ENCODE measurements at regions of chr2 and their contacts with region 1.

Region 1: DNA sequence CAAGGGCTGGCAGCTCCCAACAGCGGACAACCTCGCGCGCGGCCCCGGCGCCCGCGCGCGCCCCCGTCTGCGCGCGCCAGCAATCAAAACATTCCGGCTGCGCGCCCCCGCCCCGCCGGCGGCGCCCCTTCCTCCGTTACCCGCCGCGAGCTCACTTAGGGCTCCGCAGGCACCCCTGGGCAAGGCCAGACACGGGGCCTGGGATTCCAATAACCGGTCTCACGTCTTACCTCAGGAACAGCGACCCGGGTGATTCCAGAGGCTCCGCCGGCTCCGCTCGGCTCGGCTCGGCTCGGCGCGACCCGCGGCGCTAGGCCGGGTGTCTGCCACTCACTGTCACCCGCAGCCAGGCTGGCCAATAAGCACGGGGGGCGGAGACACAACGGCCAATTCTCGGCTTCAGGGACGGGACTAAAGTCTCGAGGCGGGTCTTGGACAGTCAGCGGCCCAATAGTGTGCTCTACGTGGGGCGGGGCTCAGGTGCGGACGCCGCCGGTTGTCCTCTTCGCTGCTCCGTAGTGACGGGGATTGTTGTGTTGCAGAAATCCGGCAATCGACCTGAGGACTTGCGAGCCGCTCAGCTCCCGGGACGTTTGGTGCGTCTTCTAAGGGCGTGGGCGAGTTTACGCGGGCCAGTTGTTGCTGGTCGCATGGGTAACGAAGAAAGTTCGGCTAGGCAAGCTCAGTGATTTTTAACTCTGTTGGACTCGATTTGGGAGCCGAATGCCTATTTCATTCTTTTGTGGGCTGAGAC is at the starts of genes ANKZF1 and ATG9A:
- DNase-seq: peak; percentile 95 to 99 (median 98)
- ATAC-seq: peak; percentile 96
- H3K4me3 ChIP-seq: peak within 1 kb of the TSS; percentile 83 to 93
- H3K4me3 Mint-ChIP-seq: peak within 1 kb of the TSS; percentile 99
- H3K27ac ChIP-seq: peak within 1 kb of the TSS; percentile 79 to 95
- H3K27ac Mint-ChIP-seq: peak within 1 kb of the TSS; percentile 98
- H3K4me1 ChIP-seq: peaks cover 39% of the 10 kb centered on the region
- H3K4me1 Mint-ChIP-seq: peaks cover 58% of the 10 kb centered on the region
- H3K27me3 ChIP-seq: no peaks in the 10 kb centered on the region
- H3K27me3 Mint-ChIP-seq: no peaks in the 10 kb centered on the region
- CTCF ChIP-seq: no peak
- total RNA-seq, gene ANKZF1: 97.4 to 99.5 TPM
- total RNA-seq, gene ATG9A: 103 to 116 TPM

Region 2: GRCh38 chr2:218710687-218711549 is 518.6 kb before region 1 on chr2 and contains the start of gene TTLL4:
- CTCF ChIA-PET with region 1: no interaction called
- POLR2A ChIA-PET with region 1: no interaction called
- intact Hi-C with region 1: loop called in 1 of 2 experiments (anchors 1 kb)
- DNase-seq: peak; percentile 97 to 99 (median 99)
- ATAC-seq: peak; percentile 99
- H3K4me3 ChIP-seq: peak within 1 kb of the TSS; percentile 86 to 92
- H3K4me3 Mint-ChIP-seq: peak within 1 kb of the TSS; percentile 91
- H3K27ac ChIP-seq: peak within 1 kb of the TSS; percentile 73 to 90
- H3K27ac Mint-ChIP-seq: peak within 1 kb of the TSS; percentile 84
- H3K4me1 ChIP-seq: peaks cover 13% of the 10 kb centered on the region
- H3K4me1 Mint-ChIP-seq: peaks cover 19% of the 10 kb centered on the region
- H3K27me3 ChIP-seq: no peaks in the 10 kb centered on the region
- H3K27me3 Mint-ChIP-seq: peaks cover 6% of the 10 kb centered on the region
- CTCF ChIP-seq: peak; percentile 76
- total RNA-seq, gene TTLL4: 6.9 to 8.1 TPM

Region 3: GRCh38 chr2:219218732-219219701 is 10.5 kb before region 1 on chr2 and contains the start of gene ABCB6:
- CTCF ChIA-PET with region 1: interaction called, 6 read pairs
- POLR2A ChIA-PET with region 1: interaction called, 34 read pairs
- intact Hi-C with region 1: loop called (anchors 1 kb)
- DNase-seq: peak; percentile 59 to 92 (median 87)
- ATAC-seq: peak; percentile 91
- H3K4me3 ChIP-seq: peak within 1 kb of the TSS; percentile 50 to 87
- H3K4me3 Mint-ChIP-seq: peak within 1 kb of the TSS; percentile 82
- H3K27ac ChIP-seq: peak within 1 kb of the TSS; percentile 43 to 47
- H3K27ac Mint-ChIP-seq: peak within 1 kb of the TSS; percentile 72
- H3K4me1 ChIP-seq: peaks cover 23% of the 10 kb centered on the region
- H3K4me1 Mint-ChIP-seq: peaks cover 19% of the 10 kb centered on the region
- H3K27me3 ChIP-seq: no peaks in the 10 kb centered on the region
- H3K27me3 Mint-ChIP-seq: no peaks in the 10 kb centered on the region
- CTCF ChIP-seq: no peak
- total RNA-seq, gene ABCB6: 3.4 to 3.5 TPM

Region 4: GRCh38 chr2:219245148-219245898 is 15.8 kb after region 1 on chr2 and contains the starts of genes GLB1L and STK16:
- CTCF ChIA-PET with region 1: interaction called, 14 read pairs
- POLR2A ChIA-PET with region 1: interaction called, 184 read pairs
- intact Hi-C with region 1: loop called (anchors 1 kb)
- DNase-seq: peak; percentile 67 to 94 (median 87)
- ATAC-seq: peak; percentile 37
- H3K4me3 ChIP-seq: peak within 1 kb of the TSS; percentile 68 to 94
- H3K4me3 Mint-ChIP-seq: peak within 1 kb of the TSS; percentile 94
- H3K27ac ChIP-seq: peak within 1 kb of the TSS; percentile 89 to 96
- H3K27ac Mint-ChIP-seq: peak within 1 kb of the TSS; percentile 99
- H3K4me1 ChIP-seq: peaks cover 58% of the 10 kb centered on the region
- H3K4me1 Mint-ChIP-seq: peaks cover 68% of the 10 kb centered on the region
- H3K27me3 ChIP-seq: no peaks in the 10 kb centered on the region
- H3K27me3 Mint-ChIP-seq: no peaks in the 10 kb centered on the region
- CTCF ChIP-seq: no peak
- total RNA-seq, gene GLB1L: 1.7 to 2.8 TPM
- total RNA-seq, gene STK16: 12.9 to 13.2 TPM

Region 5: DNA sequence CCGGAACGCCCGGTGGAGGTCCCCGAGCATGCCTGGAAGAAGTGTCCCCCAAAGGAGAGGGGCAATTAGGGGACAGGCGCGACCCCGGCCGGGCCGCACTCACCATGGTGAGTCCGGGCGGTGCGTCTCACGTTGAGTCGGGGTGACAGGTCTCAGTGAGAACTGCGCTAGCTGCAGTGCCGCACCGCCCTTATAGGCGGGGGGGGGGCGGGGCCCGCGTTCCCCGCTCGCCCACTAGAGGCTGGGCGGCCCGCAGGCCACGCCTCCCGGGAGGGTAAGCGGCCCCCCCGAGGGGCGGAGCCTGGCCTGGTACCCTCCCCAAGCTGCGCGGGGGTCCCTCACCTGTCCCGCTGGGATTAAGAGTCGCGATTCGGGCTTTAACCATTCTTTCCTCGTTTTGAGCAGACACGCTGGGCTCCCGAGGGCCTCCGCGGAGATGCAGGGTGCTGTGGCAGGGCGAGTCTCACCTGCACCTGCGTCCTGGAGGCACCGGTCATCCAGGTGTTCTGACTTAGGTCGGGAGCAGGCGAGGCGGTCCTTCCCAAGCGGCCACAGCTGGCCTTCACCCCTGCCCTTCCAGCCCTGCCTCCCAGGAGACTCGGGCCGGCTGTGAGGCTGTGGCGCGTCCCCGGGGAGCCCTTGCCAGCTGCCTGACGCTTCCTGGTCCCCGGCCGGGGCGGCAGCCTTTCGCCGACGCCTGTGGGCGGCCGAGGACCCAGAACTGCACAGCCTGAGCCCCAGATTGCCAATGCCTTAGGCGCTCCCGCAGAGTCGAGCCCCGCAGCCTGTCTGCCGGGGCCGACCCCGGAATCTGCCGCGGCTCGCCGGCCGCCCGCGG is 24.5 kb after region 1 on chr2 and contains the start of gene TUBA4A:
- CTCF ChIA-PET with region 1: interaction called, 14 read pairs
- POLR2A ChIA-PET with region 1: interaction called, 184 read pairs
- intact Hi-C with region 1: loop called (anchors 1 kb)
- DNase-seq: peak; percentile 82 to 95 (median 91)
- ATAC-seq: peak; percentile 74
- H3K4me3 ChIP-seq: peak within 1 kb of the TSS; percentile 98 to 100
- H3K4me3 Mint-ChIP-seq: peak within 1 kb of the TSS; percentile 87
- H3K27ac ChIP-seq: peak within 1 kb of the TSS; percentile 81 to 93
- H3K27ac Mint-ChIP-seq: peak within 1 kb of the TSS; percentile 96
- H3K4me1 ChIP-seq: peaks cover 37% of the 10 kb centered on the region
- H3K4me1 Mint-ChIP-seq: peaks cover 46% of the 10 kb centered on the region
- H3K27me3 ChIP-seq: no peaks in the 10 kb centered on the region
- H3K27me3 Mint-ChIP-seq: no peaks in the 10 kb centered on the region
- CTCF ChIP-seq: no peak
- total RNA-seq, gene TUBA4A: 322 TPM

Region 6: GRCh38 chr2:219308142-219309093 is 78.9 kb after region 1 on chr2:
- CTCF ChIA-PET with region 1: no interaction called
- POLR2A ChIA-PET with region 1: no interaction called
- intact Hi-C with region 1: no loop called
- DNase-seq: peak; percentile 44 to 76 (median 67)
- ATAC-seq: peak; percentile 80
- H3K4me3 ChIP-seq: no peak overlapping the region
- H3K4me3 Mint-ChIP-seq: no peak overlapping the region
- H3K27ac ChIP-seq: no peak overlapping the region
- H3K27ac Mint-ChIP-seq: no peak overlapping the region
- H3K4me1 ChIP-seq: peaks cover 6% of the 10 kb centered on the region
- H3K4me1 Mint-ChIP-seq: peaks cover 2% of the 10 kb centered on the region
- H3K27me3 ChIP-seq: peaks cover 11 to 20% of the 10 kb centered on the region in 2 experiments
- H3K27me3 Mint-ChIP-seq: peaks cover 55% of the 10 kb centered on the region
- CTCF ChIP-seq: no peak

Measured in CD8-positive, alpha-beta T cell (primary cell).